Activated B cell treated with CpG ODN at 0.5 μM for 24 hours (primary cell): ENCODE measurements at regions of chr7 and their contacts with region 1.

Region 1: DNA sequence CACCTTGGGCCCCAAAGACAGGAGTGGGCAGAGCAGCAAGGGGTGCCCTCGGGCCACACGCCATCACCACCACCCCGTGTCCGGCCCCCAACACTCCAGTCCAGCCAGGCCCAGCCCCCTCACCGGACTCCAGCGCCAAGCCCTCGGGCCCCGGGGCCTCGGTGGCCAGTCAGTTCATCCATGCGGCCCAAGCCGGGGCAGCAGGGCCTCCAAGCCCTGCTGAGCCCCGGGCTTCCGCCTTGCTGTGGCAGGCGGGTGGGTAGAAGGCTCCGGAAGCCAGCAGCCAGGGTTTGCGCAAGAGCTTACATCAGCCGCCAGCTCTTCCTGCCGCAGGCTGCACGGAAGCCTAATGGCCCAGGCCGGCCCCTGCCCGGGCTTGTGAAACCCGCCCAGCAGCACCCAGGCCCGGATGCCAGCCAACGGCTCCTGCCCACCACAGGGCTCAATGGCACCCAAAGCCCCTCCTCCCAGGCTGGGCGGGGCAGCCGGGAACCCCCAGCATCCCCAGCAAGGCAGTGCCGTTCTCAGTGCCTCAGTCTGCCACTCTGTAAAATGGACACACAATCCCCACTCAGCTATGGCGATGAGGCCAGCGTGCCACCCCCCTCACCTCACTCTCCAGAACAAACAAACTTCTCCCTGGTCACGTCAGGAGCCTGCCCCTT is 26.5 kb downstream of the TNRC18 start:
- DNase-seq: peak; percentile 80
- ATAC-seq: peak; percentile 94
- H3K4me3 Mint-ChIP-seq: peak overlapping the region; percentile 86
- H3K27ac Mint-ChIP-seq: peak overlapping the region; percentile 89
- H3K4me1 Mint-ChIP-seq: peaks cover 30% of the 10 kb centered on the region
- H3K27me3 Mint-ChIP-seq: no peaks in the 10 kb centered on the region
- CTCF ChIP-seq: no peak

Region 2: GRCh38 chr7:5231811-5232484 is 165.2 kb before region 1 on chr7:
- CTCF ChIA-PET with region 1: no interaction called
- POLR2A ChIA-PET with region 1: interaction called, 17 read pairs
- intact Hi-C with region 1: no loop called
- DNase-seq: peak; percentile 60
- ATAC-seq: peak; percentile 65
- H3K4me3 Mint-ChIP-seq: peak overlapping the region; percentile 81
- H3K27ac Mint-ChIP-seq: peak overlapping the region; percentile 99
- H3K4me1 Mint-ChIP-seq: peaks cover 75% of the 10 kb centered on the region
- H3K27me3 Mint-ChIP-seq: no peaks in the 10 kb centered on the region
- CTCF ChIP-seq: no peak

Region 3: GRCh38 chr7:5423844-5424688 is 26.9 kb after region 1 on chr7:
- CTCF ChIA-PET with region 1: interaction called, 8 read pairs
- POLR2A ChIA-PET with region 1: interaction called, 14 read pairs
- intact Hi-C with region 1: loop called (anchors 1 kb)
- DNase-seq: peak; percentile 40
- ATAC-seq: peak; percentile 58
- H3K4me3 Mint-ChIP-seq: peak overlapping the region; percentile 83
- H3K27ac Mint-ChIP-seq: peak overlapping the region; percentile 65
- H3K4me1 Mint-ChIP-seq: peaks cover 61% of the 10 kb centered on the region
- H3K27me3 Mint-ChIP-seq: peaks cover 25% of the 10 kb centered on the region
- CTCF ChIP-seq: no peak

Region 4: DNA sequence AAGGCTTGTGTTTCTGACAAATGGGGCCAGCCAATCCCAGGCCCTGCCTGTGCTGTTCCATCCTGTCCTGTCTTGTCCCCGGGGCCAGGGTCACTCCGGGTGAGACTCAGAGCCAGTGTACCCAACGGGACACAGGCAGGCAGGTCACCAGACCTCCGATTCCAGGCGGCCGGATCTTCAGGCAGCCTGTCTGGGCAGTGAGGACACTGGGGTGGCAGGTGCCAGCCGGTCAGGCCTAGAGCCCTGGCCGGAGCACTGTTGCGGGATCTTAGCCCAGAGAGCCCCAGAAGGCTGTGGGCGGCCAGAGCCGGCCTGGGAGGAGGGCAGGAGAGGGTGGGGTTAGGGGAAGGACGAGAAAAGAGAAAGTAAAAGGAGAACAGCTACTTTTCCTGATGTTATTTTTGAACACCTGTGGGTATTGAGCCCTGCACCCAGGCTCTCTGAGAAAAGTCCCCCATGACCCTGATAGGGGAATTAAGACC is 160.8 kb after region 1 on chr7:
- CTCF ChIA-PET with region 1: no interaction called
- POLR2A ChIA-PET with region 1: interaction called, 10 read pairs
- intact Hi-C with region 1: no loop called
- DNase-seq: peak; percentile 45
- ATAC-seq: peak; percentile 13
- H3K4me3 Mint-ChIP-seq: peak overlapping the region; percentile 87
- H3K27ac Mint-ChIP-seq: peak overlapping the region; percentile 93
- H3K4me1 Mint-ChIP-seq: peaks cover 49% of the 10 kb centered on the region
- H3K27me3 Mint-ChIP-seq: no peaks in the 10 kb centered on the region
- CTCF ChIP-seq: no peak